ENCODE measurements at regions of chr6 and their contacts with region 1.

Region 1: DNA sequence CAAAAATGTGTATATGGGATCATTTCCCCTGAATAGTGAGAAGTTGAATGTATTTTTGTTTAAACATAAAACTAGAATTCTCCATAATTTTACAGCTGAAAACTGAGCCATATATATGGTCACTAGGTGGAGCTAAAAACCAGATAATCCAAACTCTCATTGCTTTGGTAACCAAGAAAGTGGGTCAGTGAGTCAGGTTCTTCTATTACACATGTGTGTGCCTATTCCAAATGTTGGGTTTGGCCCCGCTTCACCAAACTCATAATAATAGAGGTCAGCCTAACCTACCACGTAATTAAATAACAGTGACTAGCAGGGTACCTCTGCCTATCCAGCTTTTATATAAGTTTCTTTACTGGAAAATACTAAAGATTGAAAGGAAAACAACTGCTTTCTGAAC is 19.3 kb upstream of the RNGTT start:
- DNase-seq: peak in 1 of 2 experiments; percentile 42
- H3K4me3 ChIP-seq: no peak overlapping the region
- H3K27ac ChIP-seq: no peak overlapping the region
- H3K4me1 ChIP-seq: no peaks in the 10 kb centered on the region
- H3K27me3 ChIP-seq: no peaks in the 10 kb centered on the region
- CTCF ChIP-seq: peak; percentile 77

Region 2: GRCh38 chr6:89122625-89123024 is 139.9 kb after region 1 on chr6:
- CTCF ChIA-PET with region 1: no interaction called
- POLR2A ChIA-PET with region 1: interaction called, 5 read pairs
- intact Hi-C with region 1: loop called (anchors 2 kb)
- DNase-seq: peak in 1 of 2 experiments; percentile 45
- H3K4me3 ChIP-seq: no peak overlapping the region
- H3K27ac ChIP-seq: no peak overlapping the region
- H3K4me1 ChIP-seq: no peaks in the 10 kb centered on the region
- H3K27me3 ChIP-seq: no peaks in the 10 kb centered on the region
- CTCF ChIP-seq: peak; percentile 60

Region 3: DNA sequence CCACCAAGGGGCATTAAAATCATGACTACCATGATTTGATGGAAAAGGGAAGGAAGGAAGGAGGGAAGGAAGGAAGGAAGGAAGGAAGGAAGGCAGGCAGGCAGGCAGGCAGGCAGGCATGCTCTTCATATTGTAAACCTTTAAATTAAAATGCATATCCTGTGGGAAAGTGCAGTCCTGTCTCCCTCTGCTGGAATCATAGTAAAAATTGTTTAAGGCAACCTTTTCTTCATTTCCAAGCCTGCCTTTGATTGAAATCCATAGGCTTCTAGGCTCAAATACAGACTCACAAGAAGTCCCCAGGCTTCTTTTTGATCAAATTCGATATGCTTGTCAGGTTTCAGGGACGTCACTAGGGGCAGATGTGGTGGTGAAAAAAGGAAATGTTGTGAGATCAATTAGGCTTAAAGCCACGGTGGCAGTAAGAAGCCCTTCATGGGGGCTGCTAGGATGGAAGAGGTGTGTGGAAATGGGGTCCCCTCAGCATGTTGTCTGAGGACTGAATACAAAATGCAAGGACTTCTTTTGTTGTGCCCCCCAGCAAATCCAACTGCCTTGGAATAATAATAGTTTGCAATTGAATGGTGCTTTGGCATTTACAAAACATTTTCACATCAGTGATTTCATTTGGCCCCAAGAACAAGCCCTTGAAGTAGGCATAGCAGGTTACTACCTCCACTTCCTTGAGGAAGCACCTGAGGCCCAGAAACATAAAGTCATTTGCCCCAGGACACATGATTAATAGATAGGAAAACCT is 260.0 kb after region 1 on chr6:
- CTCF ChIA-PET with region 1: no interaction called
- POLR2A ChIA-PET with region 1: no interaction called
- intact Hi-C with region 1: loop called (anchors 1 kb)
- DNase-seq: peak in 1 of 2 experiments; percentile 43
- H3K4me3 ChIP-seq: no peak overlapping the region
- H3K27ac ChIP-seq: peak overlapping the region; percentile 33
- H3K4me1 ChIP-seq: peaks cover 12% of the 10 kb centered on the region; the same call in 1 of the 2 replicates
- H3K27me3 ChIP-seq: no peaks in the 10 kb centered on the region
- CTCF ChIP-seq: peak; percentile 58

Region 4: GRCh38 chr6:89610149-89610642 is 627.5 kb after region 1 on chr6:
- CTCF ChIA-PET with region 1: no interaction called
- POLR2A ChIA-PET with region 1: no interaction called
- intact Hi-C with region 1: loop called (anchors 5 kb)
- DNase-seq: peak in 1 of 2 experiments; percentile 50
- H3K4me3 ChIP-seq: no peak overlapping the region
- H3K27ac ChIP-seq: no peak overlapping the region
- H3K4me1 ChIP-seq: no peaks in the 10 kb centered on the region
- H3K27me3 ChIP-seq: no peaks in the 10 kb centered on the region
- CTCF ChIP-seq: peak; percentile 76

Measured in PC-9 (cell line).